ENCODE measurements at regions of chr4 and their contacts with region 1.

Region 1: GRCh38 chr4:185011408-185011807 is 6.9 kb upstream of the HELT start:
- DNase-seq: no peak
- H3K4me3 Mint-ChIP-seq: no peak overlapping the region
- H3K27ac Mint-ChIP-seq: no peak overlapping the region
- H3K4me1 Mint-ChIP-seq: peaks cover 9% of the 10 kb centered on the region
- H3K27me3 Mint-ChIP-seq: peaks cover 75% of the 10 kb centered on the region

Region 2: DNA sequence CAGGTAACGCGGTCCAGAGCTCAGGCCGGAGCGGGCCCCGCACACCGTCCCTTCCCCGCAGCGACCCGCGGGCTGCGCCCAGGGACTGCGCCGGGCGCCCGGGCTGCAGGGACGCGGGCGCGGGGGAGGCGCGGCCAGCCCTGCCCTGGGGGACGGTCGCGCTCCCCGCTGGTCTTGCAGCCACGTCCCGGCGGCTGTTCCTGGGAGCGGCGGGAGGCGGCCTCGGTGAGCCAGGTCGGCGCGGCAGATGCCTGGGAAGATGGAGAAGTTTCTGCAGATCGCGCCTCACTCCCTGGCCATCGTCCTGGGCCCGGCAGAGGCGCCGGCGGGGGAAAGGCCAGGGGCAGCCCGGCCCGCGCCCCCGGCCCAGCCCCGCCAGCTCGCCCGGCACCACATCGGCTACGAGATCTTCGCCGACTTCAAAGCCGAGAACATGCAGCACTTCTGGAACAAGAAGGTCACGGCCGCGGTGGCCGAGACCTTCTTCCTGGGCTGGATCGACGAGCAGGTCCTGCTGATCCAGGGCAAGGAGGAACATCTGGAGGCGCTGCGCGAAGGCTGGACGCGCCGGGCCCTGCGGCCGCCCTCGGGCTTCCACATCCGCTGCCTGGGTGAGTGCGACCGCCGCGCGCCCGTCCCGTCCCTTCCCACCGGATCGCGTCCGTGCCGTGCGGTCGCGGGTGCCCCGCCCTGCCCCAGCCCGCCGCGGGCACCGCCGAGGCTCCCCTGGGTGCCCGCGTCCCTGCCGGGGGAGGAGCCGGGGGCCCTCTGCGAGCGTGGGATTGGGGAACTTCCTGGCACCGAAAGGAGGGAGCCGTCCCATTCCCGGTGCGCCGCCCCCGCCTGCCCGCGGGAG is 1213.7 kb before region 1 on chr4:
- intact Hi-C with region 1: loop called (anchors 10 kb)
- DNase-seq: peak; percentile 68
- H3K4me3 Mint-ChIP-seq: peak overlapping the region; percentile 41
- H3K27ac Mint-ChIP-seq: no peak overlapping the region
- H3K4me1 Mint-ChIP-seq: peaks cover 7% of the 10 kb centered on the region
- H3K27me3 Mint-ChIP-seq: peaks cover 69% of the 10 kb centered on the region

Region 3: GRCh38 chr4:185128272-185129119 is 117.1 kb after region 1 on chr4:
- intact Hi-C with region 1: loop called (anchors 2 kb)
- DNase-seq: peak; percentile 73
- H3K4me3 Mint-ChIP-seq: peak overlapping the region; percentile 72
- H3K27ac Mint-ChIP-seq: no peak overlapping the region
- H3K4me1 Mint-ChIP-seq: peaks cover 7% of the 10 kb centered on the region
- H3K27me3 Mint-ChIP-seq: peaks cover 59% of the 10 kb centered on the region

Region 4: DNA sequence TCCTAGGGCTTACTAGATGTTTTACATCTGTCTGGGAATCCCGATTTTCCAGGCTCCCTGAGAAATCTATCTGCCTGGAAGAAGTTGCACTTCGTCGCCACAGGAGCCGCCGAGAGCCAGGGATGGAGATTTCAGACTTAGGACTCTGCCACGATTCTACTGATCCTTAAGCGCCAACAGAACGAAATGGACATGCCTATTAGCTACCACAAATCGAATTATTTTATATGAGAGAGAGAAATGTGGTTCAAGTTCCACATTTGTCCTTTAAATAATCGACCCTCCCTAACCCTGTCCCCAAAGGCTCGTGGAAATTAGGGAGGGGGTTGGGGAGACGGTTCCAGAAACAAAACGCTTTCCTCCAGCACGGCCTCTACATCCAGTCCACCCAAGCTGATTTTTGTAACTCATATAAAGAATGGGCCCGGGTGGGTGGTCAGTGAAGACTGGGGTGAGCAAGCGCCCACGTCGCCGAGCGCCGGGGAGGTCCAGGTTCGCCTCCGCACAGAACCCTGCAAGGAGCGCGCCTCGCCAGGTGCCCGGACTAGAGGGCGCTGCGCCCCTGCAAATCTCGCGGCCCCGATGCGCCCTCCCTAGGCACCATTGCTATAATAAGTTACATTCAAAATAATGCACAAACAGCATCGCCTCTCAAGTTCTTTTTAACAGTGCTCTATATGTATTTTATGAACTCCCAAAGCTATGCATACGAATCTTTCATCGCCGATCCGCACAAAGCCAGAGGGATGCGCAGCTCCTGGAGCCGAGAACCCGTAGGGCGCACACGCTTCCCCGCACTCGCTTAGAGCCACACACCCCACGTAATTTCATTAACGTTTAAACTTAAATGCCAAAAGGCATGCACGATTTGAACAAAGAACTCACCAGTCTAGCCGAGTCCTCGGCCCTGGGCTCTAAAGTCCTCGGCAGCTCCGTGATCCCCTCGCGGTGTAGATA is 1714.3 kb after region 1 on chr4:
- intact Hi-C with region 1: loop called (anchors 10 kb)
- DNase-seq: peak; percentile 54
- H3K4me3 Mint-ChIP-seq: no peak overlapping the region
- H3K27ac Mint-ChIP-seq: peak overlapping the region; percentile 34
- H3K4me1 Mint-ChIP-seq: peaks cover 9% of the 10 kb centered on the region
- H3K27me3 Mint-ChIP-seq: peaks cover 47% of the 10 kb centered on the region

Measured in activated CD4-positive, alpha-beta T cell treated with anti-CD3 and anti-CD28 coated beads, Interleukin-2, amount 10 ng/mL, durations not matched to agents 24 days and 14 days (primary cell).